ENCODE measurements at regions of chr2 and their contacts with region 1.

Region 1: GRCh38 chr2:120343433-120344105 is 2.4 kb upstream of the INHBB start:
- DNase-seq: peak; percentile 82 to 89
- H3K4me3 ChIP-seq: peak overlapping the region; percentile 57 to 78
- H3K27ac ChIP-seq: peak overlapping the region; percentile 80 to 82
- H3K4me1 ChIP-seq: peaks cover 0 to 45% (median 38%) of the 10 kb centered on the region in 4 donors
- H3K27me3 ChIP-seq: peaks cover 0 to 55% of the 10 kb centered on the region in 2 donors
- CTCF ChIP-seq: peak; percentile 91 to 92

Region 2: GRCh38 chr2:120283649-120284048 is 59.9 kb before region 1 on chr2:
- intact Hi-C with region 1: no loop called
- DNase-seq: no peak
- H3K4me3 ChIP-seq: no peak overlapping the region
- H3K27ac ChIP-seq: no peak overlapping the region
- H3K4me1 ChIP-seq: peaks cover 0 to 2% (median 0%) of the 10 kb centered on the region in 4 donors
- H3K27me3 ChIP-seq: no peaks in the 10 kb centered on the region
- CTCF ChIP-seq: peak in 1 of 2 experiments; percentile 20

Region 3: GRCh38 chr2:120360307-120360855 is 16.8 kb after region 1 on chr2:
- intact Hi-C with region 1: no loop called
- DNase-seq: no peak
- H3K4me3 ChIP-seq: no peak overlapping the region
- H3K27ac ChIP-seq: no peak overlapping the region
- H3K4me1 ChIP-seq: no peaks in the 10 kb centered on the region
- H3K27me3 ChIP-seq: peaks cover 0 to 2% of the 10 kb centered on the region in 2 donors
- CTCF ChIP-seq: no peak

Region 4: DNA sequence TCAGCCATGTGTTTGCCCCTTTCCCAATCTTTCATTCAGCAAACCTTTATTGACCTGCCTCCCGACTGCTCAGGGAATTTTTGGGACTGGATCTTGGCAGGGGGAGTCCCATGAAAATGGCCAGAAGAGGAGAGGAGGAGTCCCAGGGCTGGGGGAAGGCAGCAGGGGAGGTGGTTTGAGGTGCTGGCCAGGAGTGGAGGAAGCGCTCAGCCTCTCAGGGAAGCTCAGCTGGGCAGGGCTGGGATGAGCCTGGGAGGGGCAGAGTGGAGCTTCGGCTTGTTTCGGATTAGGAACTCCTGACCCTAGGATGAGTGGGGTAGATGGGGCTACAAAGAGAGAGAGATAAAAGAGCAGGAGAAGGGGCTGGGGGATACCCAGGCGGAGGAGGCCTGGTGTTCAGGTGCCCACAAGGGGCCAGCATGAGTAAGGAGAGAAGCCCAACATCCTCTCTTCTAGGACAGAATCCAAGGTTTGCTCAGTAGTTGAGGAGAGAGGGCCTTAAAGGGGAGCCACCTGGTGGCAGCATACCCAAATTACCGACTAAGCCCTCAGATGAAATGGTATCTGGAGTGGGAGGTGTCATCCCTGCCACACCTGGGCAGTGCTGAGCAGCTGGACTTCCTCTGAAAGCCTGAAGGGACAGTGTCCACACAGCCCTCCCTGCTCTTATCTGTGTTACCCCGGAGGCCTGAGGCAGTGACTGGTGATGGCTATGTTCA is 93.5 kb after region 1 on chr2:
- intact Hi-C with region 1: loop called (anchors 5 kb)
- DNase-seq: no peak
- H3K4me3 ChIP-seq: no peak overlapping the region
- H3K27ac ChIP-seq: no peak overlapping the region
- H3K4me1 ChIP-seq: peaks cover 5 to 9% (median 6%) of the 10 kb centered on the region in 4 donors
- H3K27me3 ChIP-seq: peaks cover 0 to 33% of the 10 kb centered on the region in 2 donors
- CTCF ChIP-seq: no peak

Region 5: GRCh38 chr2:120539937-120540718 is 196.6 kb after region 1 on chr2:
- intact Hi-C with region 1: loop called (anchors 5 kb)
- DNase-seq: peak; percentile 89 to 97
- H3K4me3 ChIP-seq: peak overlapping the region in 1 of 2 donors; percentile 12
- H3K27ac ChIP-seq: peak overlapping the region; percentile 73 to 83
- H3K4me1 ChIP-seq: peaks cover 0 to 27% (median 25%) of the 10 kb centered on the region in 4 donors
- H3K27me3 ChIP-seq: no peaks in the 10 kb centered on the region
- CTCF ChIP-seq: no peak

Region 6: DNA sequence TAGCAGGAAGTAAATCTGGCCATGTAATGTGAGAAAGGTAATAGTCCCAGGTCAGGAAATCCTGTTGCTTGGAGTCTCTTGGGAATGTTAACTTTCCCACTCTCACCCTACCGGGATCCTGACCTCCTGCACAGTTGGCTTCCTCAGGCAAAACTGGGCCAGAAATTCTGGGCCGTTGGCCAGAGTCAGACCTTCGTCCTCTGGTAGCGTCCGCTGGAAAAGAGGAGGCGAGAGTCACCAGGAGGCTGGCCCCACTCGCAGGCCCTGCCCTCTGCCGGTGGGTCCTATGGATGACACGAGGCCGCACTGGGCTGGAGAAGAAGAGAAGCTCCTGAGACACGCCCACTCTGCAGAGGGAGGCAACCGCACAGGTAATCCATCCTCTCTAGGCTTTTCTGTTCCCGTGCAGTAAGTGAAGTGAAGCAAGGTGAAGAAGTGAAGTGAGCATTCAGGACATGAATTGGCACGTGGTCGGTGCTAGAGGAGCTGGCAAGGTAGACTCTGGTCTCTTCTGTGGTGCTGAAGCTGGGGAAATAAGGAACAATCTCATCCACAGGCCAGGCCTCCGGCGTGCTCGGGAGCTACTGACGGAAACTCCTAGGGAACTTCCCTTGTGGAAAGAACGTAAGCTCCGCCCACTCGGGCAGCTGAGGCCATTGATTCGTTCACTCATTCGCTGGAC is 209.4 kb after region 1 on chr2:
- intact Hi-C with region 1: loop called (anchors 2 kb)
- DNase-seq: peak; percentile 75 to 93
- H3K4me3 ChIP-seq: no peak overlapping the region
- H3K27ac ChIP-seq: no peak overlapping the region
- H3K4me1 ChIP-seq: peaks cover 0 to 30% (median 23%) of the 10 kb centered on the region in 4 donors
- H3K27me3 ChIP-seq: no peaks in the 10 kb centered on the region
- CTCF ChIP-seq: peak; percentile 74 to 79

Region 7: DNA sequence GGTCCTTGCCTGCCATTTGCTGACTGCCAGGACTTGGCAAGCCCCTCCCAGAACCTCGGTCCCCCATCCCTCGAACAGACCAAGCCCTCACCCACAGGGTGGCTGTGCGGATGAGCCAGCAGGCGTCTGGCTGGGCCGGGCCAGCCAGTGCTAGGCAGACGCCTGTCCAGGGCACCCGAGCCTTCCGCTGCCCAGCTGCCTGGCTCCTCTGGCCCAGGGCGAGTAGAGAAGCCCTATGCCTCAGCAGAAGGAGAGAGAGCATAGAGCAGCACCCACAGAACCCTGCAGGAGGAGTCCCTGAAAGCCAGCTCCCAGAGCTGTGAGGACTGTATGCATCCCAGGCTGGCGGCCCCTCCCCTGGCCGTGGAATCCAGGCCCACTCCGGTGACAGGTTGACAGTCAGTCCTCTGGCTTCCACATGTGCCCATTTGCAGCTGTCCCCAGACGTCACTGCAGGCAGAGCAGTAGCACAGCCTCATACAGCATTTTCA is 330.0 kb after region 1 on chr2:
- intact Hi-C with region 1: loop called (anchors 2 kb)
- DNase-seq: no peak
- H3K4me3 ChIP-seq: no peak overlapping the region
- H3K27ac ChIP-seq: no peak overlapping the region
- H3K4me1 ChIP-seq: peaks cover 0 to 24% (median 4%) of the 10 kb centered on the region in 4 donors
- H3K27me3 ChIP-seq: peaks cover 0 to 69% of the 10 kb centered on the region in 2 donors
- CTCF ChIP-seq: no peak

Region 8: DNA sequence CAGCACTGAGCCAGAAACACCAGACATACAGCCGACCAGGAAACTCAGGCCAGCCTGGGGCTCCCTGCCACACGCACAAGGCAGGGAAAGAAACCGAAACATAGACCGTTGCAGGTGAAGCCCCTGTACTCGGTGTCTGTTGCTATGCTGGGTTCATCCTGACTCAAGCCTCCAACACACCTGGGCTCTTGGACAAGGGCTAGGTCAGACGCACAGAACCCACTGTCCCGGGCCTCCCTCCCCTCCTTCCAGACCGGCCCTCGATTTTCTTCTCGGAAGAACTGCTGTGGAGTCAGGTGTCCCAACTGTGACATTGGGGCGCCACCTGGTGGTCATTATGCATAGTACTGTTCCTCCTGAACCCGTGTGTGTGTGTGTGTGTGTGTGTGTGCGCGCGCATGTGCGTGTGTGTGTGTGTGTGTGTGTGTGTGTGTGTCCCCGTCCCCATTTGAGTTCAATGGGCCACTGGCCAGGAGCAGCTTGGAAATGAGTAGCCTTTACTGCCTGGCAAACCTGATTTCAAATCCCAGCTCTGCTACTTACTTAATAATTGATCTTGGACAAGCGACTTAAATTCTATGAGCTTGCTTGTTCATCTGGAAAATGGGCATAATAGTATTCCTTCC is 336.7 kb after region 1 on chr2:
- intact Hi-C with region 1: loop called (anchors 1 kb)
- DNase-seq: peak; percentile 80 to 84
- H3K4me3 ChIP-seq: no peak overlapping the region
- H3K27ac ChIP-seq: no peak overlapping the region
- H3K4me1 ChIP-seq: peaks cover 0 to 13% (median 5%) of the 10 kb centered on the region in 4 donors
- H3K27me3 ChIP-seq: peaks cover 0 to 59% of the 10 kb centered on the region in 2 donors
- CTCF ChIP-seq: peak; percentile 45 to 88

Region 9: GRCh38 chr2:121076885-121077549 is 733.4 kb after region 1 on chr2:
- intact Hi-C with region 1: loop called (anchors 10 kb)
- DNase-seq: peak; percentile 42 to 74
- H3K4me3 ChIP-seq: no peak overlapping the region
- H3K27ac ChIP-seq: no peak overlapping the region
- H3K4me1 ChIP-seq: peaks cover 0 to 18% (median 8%) of the 10 kb centered on the region in 4 donors
- H3K27me3 ChIP-seq: peaks cover 0 to 62% of the 10 kb centered on the region in 2 donors
- CTCF ChIP-seq: peak; percentile 55 to 78

Measured in tibial artery (tissue), 4 donors.